Esophagus squamous epithelium (tissue), 5 donors: ENCODE measurements at regions of chr6 and their contacts with region 1.

Region 1: GRCh38 chr6:148247386-148248063 is 95.1 kb upstream of the SASH1 start:
- DNase-seq: no peak
- H3K4me3 ChIP-seq: no peak overlapping the region
- H3K27ac ChIP-seq: no peak overlapping the region
- H3K4me1 ChIP-seq: peaks cover 0 to 32% (median 4%) of the 10 kb centered on the region in 3 donors
- H3K27me3 ChIP-seq: no peaks in the 10 kb centered on the region
- CTCF ChIP-seq: no peak
- POLR2A ChIP-seq: no peak

Region 2: DNA sequence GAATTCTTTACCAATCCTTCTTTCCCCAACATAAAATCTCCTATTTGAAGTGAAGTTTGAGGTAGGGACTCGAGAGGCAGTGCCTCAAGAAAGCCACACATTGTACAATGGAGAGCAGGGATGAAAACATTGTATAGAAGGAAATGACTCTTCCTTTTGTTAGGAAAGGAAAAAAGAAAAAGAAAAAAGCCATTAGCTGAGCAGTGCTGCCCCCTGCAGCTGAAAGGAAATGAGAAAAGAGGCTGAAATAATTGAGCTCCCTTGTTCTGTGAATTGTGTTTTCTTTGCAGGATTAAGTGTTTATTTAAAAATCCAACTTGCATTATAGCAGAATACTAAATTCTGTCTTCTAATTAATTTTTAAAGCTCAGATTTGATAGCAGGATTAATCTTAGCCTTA is 67.7 kb before region 1 on chr6:
- intact Hi-C with region 1: loop called (anchors 5 kb)
- DNase-seq: no peak
- H3K4me3 ChIP-seq: no peak overlapping the region
- H3K27ac ChIP-seq: no peak overlapping the region
- H3K4me1 ChIP-seq: peaks cover 0 to 13% (median 0%) of the 10 kb centered on the region in 3 donors
- H3K27me3 ChIP-seq: no peaks in the 10 kb centered on the region
- CTCF ChIP-seq: peak; percentile 25 to 71 (median 45)
- POLR2A ChIP-seq: no peak